ENCODE measurements at regions of chr6 and their contacts with region 1.

Region 1: GRCh38 chr6:32177788-32178546 is at the start of gene RNF5:
- DNase-seq: peak; percentile 97
- H3K4me3 Mint-ChIP-seq: peak within 1 kb of the TSS; percentile 91
- H3K27ac Mint-ChIP-seq: peak within 1 kb of the TSS; percentile 96
- H3K4me1 Mint-ChIP-seq: peaks cover 61% of the 10 kb centered on the region
- H3K27me3 Mint-ChIP-seq: no peaks in the 10 kb centered on the region
- total RNA-seq, gene RNF5: 39.5 to 39.9 TPM

Region 2: DNA sequence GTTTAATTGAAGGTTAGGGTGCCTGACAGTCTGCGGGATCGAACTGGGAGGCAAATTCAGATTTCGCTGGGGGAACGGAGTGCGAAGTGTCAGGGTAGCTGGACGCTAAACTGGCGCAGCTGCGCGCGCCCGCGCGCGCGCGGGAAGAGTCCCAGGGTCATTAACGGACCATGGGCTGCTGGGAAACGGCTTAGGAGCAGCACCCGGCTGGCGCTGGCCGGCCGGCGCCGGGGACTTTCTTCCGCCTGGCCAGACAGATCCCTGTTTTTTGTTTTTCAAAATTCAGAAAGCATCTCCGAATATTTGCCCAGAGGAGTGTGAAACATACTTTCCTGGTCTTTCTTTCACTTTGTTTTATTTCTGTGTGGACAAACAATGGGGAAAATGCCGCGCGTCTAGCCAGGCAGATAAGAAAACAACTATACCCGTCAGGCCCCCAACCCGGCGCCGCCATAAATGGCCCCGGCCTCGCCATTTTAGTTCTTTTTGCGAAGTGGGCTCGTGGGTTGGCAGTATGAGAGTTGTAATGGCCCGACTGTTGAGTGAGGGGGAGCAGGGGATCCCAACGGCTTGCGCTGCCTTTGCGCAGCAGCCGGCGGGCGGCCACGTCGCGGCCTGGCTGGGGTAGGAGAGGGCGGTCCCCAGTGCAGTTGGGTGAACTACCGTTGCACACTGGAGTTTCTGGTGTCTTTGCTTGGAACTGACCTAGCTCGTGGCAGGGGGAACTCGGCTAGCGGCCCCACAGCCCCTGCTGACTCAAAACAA is 343.4 kb before region 1 on chr6:
- CTCF ChIA-PET with region 1: no interaction called
- intact Hi-C with region 1: loop called (anchors 2 kb)
- DNase-seq: peak; percentile 80
- H3K4me3 Mint-ChIP-seq: peak overlapping the region; percentile 94
- H3K27ac Mint-ChIP-seq: peak overlapping the region; percentile 98
- H3K4me1 Mint-ChIP-seq: peaks cover 46% of the 10 kb centered on the region
- H3K27me3 Mint-ChIP-seq: no peaks in the 10 kb centered on the region

Region 3: GRCh38 chr6:31958741-31959739 is 218.9 kb before region 1 on chr6 and contains the starts of genes NELFE and SKIC2:
- CTCF ChIA-PET with region 1: no interaction called
- intact Hi-C with region 1: loop called (anchors 1 kb)
- DNase-seq: peak; percentile 99
- H3K4me3 Mint-ChIP-seq: peak within 1 kb of the TSS; percentile 95
- H3K27ac Mint-ChIP-seq: peak within 1 kb of the TSS; percentile 94
- H3K4me1 Mint-ChIP-seq: peaks cover 41% of the 10 kb centered on the region
- H3K27me3 Mint-ChIP-seq: no peaks in the 10 kb centered on the region
- total RNA-seq, gene NELFE: 83.2 to 87.4 TPM
- total RNA-seq, gene SKIC2: 93.6 to 101 TPM

Region 4: DNA sequence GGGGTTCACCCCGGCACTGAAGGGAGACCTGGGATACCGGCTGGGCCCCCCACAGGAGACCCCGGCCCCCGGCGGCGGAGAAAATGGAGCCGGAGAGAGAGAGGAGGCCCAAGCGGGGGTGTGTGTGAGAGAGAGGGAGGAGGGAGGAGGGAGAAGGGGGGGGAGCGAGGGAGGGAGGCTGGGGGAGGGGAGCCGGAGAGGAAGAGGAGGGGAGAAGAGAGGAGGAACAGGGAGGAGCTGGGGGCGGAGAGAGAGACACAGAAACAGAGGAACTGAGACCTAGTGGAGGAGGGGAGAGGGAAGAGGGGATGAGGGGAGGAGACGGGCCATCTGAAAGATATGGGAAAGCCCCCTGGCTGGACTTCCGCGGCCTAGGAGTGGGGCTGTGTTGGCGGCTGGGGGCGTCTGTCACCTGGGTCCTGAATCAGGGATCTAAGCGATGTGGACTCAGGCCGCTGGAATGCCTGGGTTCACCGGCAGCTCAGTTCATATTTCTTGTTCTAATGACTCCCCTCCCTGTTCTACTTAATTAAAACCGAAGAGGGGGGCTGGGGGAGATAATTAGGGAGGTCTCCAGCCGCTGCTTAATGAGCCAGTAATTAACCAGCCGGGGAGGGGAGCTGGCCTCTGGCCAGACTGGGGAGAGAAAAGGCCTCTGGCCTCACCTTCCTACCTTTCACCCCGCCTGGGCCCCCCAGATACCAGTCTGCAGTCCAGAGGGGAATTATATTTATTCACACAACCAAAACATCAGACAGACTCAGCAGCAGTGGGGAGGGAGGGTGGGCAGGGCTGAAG is 12.3 kb after region 1 on chr6 and contains the start of gene PBX2:
- CTCF ChIA-PET with region 1: interaction called, 11 read pairs
- intact Hi-C with region 1: loop called (anchors 1 kb)
- DNase-seq: peak; percentile 93
- H3K4me3 Mint-ChIP-seq: peak within 1 kb of the TSS; percentile 95
- H3K27ac Mint-ChIP-seq: peak within 1 kb of the TSS; percentile 99
- H3K4me1 Mint-ChIP-seq: peaks cover 66% of the 10 kb centered on the region
- H3K27me3 Mint-ChIP-seq: no peaks in the 10 kb centered on the region
- total RNA-seq, gene PBX2: 46.5 to 47.7 TPM

Region 5: GRCh38 chr6:32843979-32844838 is 666.2 kb after region 1 on chr6 and contains the start of gene PSMB8:
- CTCF ChIA-PET with region 1: no interaction called
- intact Hi-C with region 1: loop called (anchors 5 kb)
- DNase-seq: peak; percentile 100
- H3K4me3 Mint-ChIP-seq: peak within 1 kb of the TSS; percentile 98
- H3K27ac Mint-ChIP-seq: peak within 1 kb of the TSS; percentile 99
- H3K4me1 Mint-ChIP-seq: peaks cover 71% of the 10 kb centered on the region
- H3K27me3 Mint-ChIP-seq: no peaks in the 10 kb centered on the region
- total RNA-seq, gene PSMB8: 286 to 308 TPM

Measured in activated naive CD4-positive, alpha-beta T cell treated with anti-CD3 and anti-CD28 coated beads for 36 hours (primary cell).